ENCODE measurements at regions of chr3 and their contacts with region 1.

Region 1: DNA sequence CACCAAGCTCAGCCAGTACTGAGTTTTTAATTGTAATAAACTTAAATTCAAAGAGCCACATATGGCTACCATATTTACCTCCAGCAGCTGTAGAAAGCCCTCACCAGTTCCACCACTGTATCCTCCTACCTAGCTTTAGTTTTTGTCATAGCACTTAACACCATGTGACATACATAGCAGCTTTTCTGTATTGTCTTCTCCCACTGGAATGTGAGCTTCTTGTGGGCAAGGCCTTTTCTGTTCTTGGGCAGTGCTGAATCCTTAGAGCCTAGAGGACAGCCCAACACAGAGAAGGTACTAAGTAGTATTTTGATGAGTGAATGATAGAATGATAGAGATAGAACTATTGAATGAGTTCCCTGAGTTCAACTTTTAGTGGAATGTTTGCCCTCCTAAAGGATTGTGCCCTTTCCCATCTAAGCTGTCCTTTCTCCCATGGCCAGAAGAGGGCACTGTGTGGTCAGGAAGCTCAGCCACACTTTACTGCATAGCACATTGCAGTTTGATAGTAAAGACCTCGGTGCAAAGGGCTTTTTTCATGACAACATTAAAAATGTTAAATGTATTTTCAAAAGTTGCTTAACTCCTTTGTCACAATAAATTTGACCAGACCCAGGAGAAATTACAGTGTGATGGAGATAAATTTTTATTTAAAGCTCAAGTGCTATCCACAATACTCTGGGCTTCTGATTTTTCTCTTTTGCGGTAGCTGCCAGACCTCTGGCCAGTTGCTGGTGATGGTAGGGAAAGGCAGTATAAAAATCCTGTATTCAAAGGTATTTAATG is 115.8 kb downstream of the GHSR start:
- DNase-seq: peak; percentile 67
- ATAC-seq: peak; percentile 81
- H3K4me3 Mint-ChIP-seq: no peak overlapping the region
- H3K27ac Mint-ChIP-seq: no peak overlapping the region
- H3K4me1 Mint-ChIP-seq: peaks cover 5% of the 10 kb centered on the region
- H3K27me3 Mint-ChIP-seq: no peaks in the 10 kb centered on the region

Region 2: GRCh38 chr3:171906951-171907676 is 425.3 kb before region 1 on chr3:
- CTCF ChIA-PET with region 1: no interaction called
- POLR2A ChIA-PET with region 1: no interaction called
- intact Hi-C with region 1: no loop called
- DNase-seq: no peak
- ATAC-seq: no peak
- H3K4me3 Mint-ChIP-seq: no peak overlapping the region
- H3K27ac Mint-ChIP-seq: no peak overlapping the region
- H3K4me1 Mint-ChIP-seq: no peaks in the 10 kb centered on the region
- H3K27me3 Mint-ChIP-seq: peaks cover 6% of the 10 kb centered on the region

Region 3: GRCh38 chr3:172039436-172040077 is 292.9 kb before region 1 on chr3 and contains the start of gene FNDC3B:
- CTCF ChIA-PET with region 1: interaction called, 10 read pairs
- POLR2A ChIA-PET with region 1: no interaction called
- intact Hi-C with region 1: no loop called
- DNase-seq: peak; percentile 95
- ATAC-seq: peak; percentile 93
- H3K4me3 Mint-ChIP-seq: peak within 1 kb of the TSS; percentile 86
- H3K27ac Mint-ChIP-seq: peak within 1 kb of the TSS; percentile 88
- H3K4me1 Mint-ChIP-seq: peaks cover 24% of the 10 kb centered on the region
- H3K27me3 Mint-ChIP-seq: peaks cover 2% of the 10 kb centered on the region
- total RNA-seq, gene FNDC3B: 10.5 to 14.2 TPM

Region 4: GRCh38 chr3:172201136-172201869 is 131.1 kb before region 1 on chr3:
- CTCF ChIA-PET with region 1: no interaction called
- POLR2A ChIA-PET with region 1: no interaction called
- intact Hi-C with region 1: no loop called
- DNase-seq: no peak
- ATAC-seq: no peak
- H3K4me3 Mint-ChIP-seq: no peak overlapping the region
- H3K27ac Mint-ChIP-seq: no peak overlapping the region
- H3K4me1 Mint-ChIP-seq: no peaks in the 10 kb centered on the region
- H3K27me3 Mint-ChIP-seq: no peaks in the 10 kb centered on the region

Region 5: DNA sequence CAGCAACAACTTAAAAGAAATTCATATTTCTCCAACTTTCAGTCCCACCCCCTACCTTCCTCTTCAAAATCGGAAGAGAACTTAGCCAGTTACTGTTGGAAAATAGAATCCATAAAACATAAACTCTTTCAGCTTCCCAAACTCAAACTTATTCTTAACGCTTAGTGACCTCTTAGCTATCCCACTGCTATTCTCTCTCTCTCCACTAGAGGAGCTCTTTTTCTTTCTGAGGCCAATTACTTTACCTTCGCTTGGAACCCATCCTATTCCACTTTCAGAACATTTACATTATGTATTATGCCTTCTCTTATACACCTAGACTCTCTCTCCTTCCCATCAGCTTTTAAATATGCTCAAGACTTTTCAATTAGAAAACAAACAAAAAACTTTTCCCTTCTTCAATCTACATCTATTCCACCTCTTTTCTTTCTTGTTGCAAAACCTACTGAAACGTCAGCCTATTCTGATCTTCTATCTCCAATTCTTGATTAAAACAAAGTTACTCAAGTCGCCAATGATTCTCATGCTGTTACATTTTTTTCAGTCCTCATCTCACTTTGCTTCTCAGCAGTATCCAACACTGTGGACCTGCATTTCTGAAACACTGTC is 129.2 kb after region 1 on chr3:
- CTCF ChIA-PET with region 1: interaction called, 11 read pairs
- POLR2A ChIA-PET with region 1: no interaction called
- intact Hi-C with region 1: no loop called
- DNase-seq: no peak
- ATAC-seq: peak; percentile 53
- H3K4me3 Mint-ChIP-seq: no peak overlapping the region
- H3K27ac Mint-ChIP-seq: no peak overlapping the region
- H3K4me1 Mint-ChIP-seq: no peaks in the 10 kb centered on the region
- H3K27me3 Mint-ChIP-seq: peaks cover 2% of the 10 kb centered on the region

Region 6: DNA sequence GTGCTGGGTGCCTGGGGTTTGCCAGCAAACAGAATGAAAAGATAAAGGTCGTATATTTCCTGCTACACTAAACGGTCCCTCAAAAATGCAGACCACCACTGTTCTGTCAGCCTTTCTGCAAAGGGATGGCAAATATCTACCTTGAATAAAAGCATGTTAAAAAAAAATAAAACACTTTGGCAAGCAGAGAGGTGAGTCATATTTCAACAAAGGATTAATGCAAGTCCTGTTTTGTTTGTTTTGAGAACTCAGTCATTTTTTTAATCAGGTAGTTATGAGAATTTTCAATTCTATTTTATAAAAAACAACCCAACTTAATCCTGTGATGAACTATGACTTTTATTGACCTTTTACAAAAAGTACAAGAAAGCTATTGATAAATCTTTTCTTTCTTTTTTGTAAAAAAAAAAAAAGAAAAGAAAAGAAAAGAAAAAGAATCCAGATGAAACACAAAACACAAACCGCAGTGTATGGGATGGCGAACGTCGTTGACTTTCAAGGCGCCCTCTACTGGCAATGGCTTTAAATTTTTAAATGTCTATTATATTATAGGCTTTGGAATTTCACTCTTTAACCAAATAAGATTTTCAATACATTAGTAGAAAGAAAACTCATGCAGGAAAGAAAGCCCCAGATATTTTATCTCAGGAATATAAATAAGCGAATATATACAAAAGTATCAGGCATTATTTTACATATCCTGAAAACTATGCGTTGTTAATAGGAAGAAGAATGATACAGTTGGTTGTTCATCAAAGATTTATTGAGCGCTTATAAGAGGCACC is 290.7 kb after region 1 on chr3:
- CTCF ChIA-PET with region 1: interaction called, 4 read pairs
- POLR2A ChIA-PET with region 1: no interaction called
- intact Hi-C with region 1: loop called in 1 of 2 experiments (anchors 1 kb)
- DNase-seq: peak; percentile 64
- ATAC-seq: peak; percentile 51
- H3K4me3 Mint-ChIP-seq: no peak overlapping the region
- H3K27ac Mint-ChIP-seq: no peak overlapping the region
- H3K4me1 Mint-ChIP-seq: peaks cover 10% of the 10 kb centered on the region
- H3K27me3 Mint-ChIP-seq: no peaks in the 10 kb centered on the region

Region 7: DNA sequence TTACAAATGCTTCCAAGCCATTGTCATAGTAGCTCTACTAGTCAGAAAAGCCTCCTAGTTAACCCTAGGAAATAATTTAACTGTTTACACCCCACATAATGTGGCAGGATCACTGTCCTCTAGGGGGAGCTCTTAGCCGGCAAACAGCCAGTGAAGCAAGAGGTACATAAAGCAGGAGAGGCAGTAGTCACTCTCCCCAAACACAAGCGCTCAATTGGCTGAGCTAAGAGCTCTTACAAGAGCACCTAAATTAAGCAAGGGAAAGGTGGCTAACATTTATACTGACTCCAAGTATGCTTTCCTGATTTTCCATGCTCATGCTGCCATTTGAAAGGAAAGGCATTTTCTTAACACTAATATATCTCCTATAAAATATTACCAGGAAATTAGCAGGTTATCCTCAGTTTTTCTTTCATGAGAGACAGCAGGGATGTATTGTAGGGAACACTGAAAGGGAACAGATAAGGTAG is 340.8 kb after region 1 on chr3:
- CTCF ChIA-PET with region 1: interaction called, 15 read pairs
- POLR2A ChIA-PET with region 1: no interaction called
- intact Hi-C with region 1: loop called in 1 of 2 experiments (anchors 2 kb)
- DNase-seq: peak; percentile 85
- ATAC-seq: peak; percentile 94
- H3K4me3 Mint-ChIP-seq: no peak overlapping the region
- H3K27ac Mint-ChIP-seq: no peak overlapping the region
- H3K4me1 Mint-ChIP-seq: no peaks in the 10 kb centered on the region
- H3K27me3 Mint-ChIP-seq: no peaks in the 10 kb centered on the region

Measured in activated CD4-positive, alpha-beta T cell treated with anti-CD3 and anti-CD28 coated beads for 36 hours (primary cell).